K562 (cell line): ENCODE measurements at regions of chr6 and their contacts with region 1.

Region 1: DNA sequence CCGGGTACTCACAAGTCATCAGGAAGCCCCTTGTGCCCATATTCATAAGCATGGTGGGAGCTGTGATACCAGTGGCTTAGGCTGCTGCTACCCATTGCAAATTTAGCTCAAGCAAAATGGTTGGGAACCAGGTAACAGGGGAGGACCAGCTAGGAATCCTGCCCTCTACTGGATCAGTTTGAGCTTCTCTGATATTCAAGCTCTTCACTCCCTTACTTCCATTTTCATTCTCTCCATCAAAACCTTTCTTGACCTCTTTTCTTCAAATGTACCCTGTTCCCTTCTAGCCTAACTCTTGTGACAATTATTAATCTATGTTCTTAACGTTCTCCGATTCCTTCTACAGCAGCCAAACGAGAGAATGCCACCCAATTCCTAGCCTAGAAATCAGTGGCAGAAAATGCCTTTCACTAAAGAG is 9.7 kb downstream of the NOL7 start:
- DNase-seq: peak; percentile 57 to 75 (median 65)
- ATAC-seq: peak; percentile 91
- H3K4me3 ChIP-seq: no peak overlapping the region
- H3K27ac ChIP-seq: no peak overlapping the region
- H3K4me1 ChIP-seq: no peaks in the 10 kb centered on the region; a peak in 1 of 5 replicates
- H3K27me3 ChIP-seq: no peaks in the 10 kb centered on the region
- CTCF ChIP-seq: peak; percentile 53 to 69 (median 67)
- EP300 ChIP-seq: no peak
- POLR2A ChIP-seq: no peak; the same call in 1 of the 2 replicates
- RAD21 ChIP-seq: peak; percentile 38 to 64

Region 2: DNA sequence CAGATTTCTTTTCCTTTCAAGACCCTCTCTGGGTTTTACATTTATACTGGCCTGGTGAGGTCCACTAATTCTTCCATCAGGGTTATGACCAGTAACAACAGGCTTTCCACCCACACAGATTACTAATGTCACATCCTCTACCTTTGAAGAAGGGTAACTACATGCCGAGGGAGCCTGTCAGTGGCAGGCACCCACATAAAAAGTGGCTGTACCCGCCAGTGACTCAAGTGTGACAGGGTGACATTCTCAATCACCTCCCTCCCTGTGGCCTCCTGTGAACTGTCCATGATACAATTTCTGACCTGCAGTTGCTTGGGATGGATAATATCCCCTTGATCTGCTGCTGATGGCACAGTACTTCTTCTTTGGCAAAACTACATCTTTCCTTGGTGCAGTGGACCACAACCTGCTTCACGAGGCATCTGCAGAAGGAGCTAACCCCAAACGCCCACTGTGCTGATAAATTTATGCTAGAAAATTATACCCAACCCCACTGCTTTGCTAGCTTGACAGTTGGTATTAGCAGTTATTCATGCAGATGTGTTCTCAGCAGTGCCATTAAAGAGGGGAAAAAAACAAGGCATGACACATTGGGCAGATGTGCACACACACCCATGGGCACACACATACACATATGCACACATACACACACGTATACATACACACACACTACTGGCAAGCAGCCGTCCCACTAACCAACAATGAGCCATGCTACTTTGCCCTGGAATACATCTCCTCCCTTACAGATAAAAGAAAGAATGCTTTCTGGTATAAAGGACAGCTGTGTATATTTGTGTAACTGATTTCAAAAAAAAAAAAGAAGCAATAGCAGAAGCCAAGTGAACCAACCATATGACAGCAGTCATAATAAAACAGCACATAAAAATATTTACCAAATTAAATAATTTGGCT is 158.3 kb before region 1 on chr6:
- CTCF ChIA-PET with region 1: no interaction called
- POLR2A ChIA-PET with region 1: no interaction called
- in situ Hi-C with region 1: no loop called
- intact Hi-C with region 1: no loop called
- DNase-seq: peak in 1 of 4 experiments; percentile 8
- ATAC-seq: no peak
- H3K4me3 ChIP-seq: no peak overlapping the region
- H3K27ac ChIP-seq: no peak overlapping the region
- H3K4me1 ChIP-seq: peaks cover 0 to 2% of the 10 kb centered on the region in 2 experiments; a peak in 1 of 5 replicates
- H3K27me3 ChIP-seq: no peaks in the 10 kb centered on the region
- CTCF ChIP-seq: no peak
- EP300 ChIP-seq: no peak
- POLR2A ChIP-seq: no peak
- RAD21 ChIP-seq: no peak

Region 3: GRCh38 chr6:13593720-13594119 is 31.2 kb before region 1 on chr6:
- CTCF ChIA-PET with region 1: no interaction called
- POLR2A ChIA-PET with region 1: no interaction called
- in situ Hi-C with region 1: no loop called
- intact Hi-C with region 1: no loop called
- DNase-seq: no peak
- ATAC-seq: no peak
- H3K4me3 ChIP-seq: no peak overlapping the region
- H3K27ac ChIP-seq: no peak overlapping the region
- H3K4me1 ChIP-seq: peaks cover 0 to 5% of the 10 kb centered on the region in 2 experiments; a peak in 2 of 5 replicates
- H3K27me3 ChIP-seq: no peaks in the 10 kb centered on the region
- CTCF ChIP-seq: no peak
- EP300 ChIP-seq: no peak
- POLR2A ChIP-seq: no peak
- RAD21 ChIP-seq: no peak

Region 4: DNA sequence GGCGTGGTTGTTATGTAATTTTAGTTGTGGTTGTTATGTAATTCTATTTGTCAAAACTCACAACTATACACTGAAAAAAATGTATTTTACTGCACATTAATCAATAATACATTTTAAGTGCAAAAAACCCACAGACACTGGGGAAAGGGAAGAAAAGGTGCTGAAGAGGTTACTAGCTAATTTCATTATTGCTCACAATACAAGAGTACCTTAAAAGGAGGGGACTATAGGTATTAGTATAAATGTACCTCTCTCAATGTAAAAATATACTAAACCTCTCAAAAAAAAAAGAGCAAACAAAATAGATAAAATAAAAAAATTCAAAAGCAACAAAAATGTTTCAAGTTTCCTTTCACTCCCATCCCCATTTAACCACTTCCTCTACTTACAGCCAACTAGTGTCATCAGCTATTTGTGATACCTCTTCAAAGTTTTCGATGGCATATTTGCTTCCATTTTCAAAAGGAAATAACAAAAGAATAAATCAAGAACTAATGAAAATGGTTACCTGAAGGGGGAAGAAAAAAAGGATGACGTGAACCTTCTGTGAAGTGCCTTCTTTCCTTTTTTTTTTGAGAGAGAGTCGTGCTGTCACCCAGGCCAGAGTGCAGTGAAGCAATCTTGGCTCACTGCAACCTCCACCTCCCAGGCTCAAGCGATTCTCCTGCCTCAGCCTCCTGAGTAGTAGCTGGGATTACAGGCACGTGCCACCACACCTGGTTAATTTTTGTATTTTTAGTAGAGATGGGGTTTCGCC is 56.6 kb after region 1 on chr6:
- CTCF ChIA-PET with region 1: no interaction called
- POLR2A ChIA-PET with region 1: no interaction called
- in situ Hi-C with region 1: no loop called
- intact Hi-C with region 1: no loop called
- DNase-seq: no peak
- ATAC-seq: peak; percentile 13
- H3K4me3 ChIP-seq: no peak overlapping the region
- H3K27ac ChIP-seq: peak overlapping the region; percentile 81; the same call in 2 of the 3 replicates
- H3K4me1 ChIP-seq: peaks cover 8 to 28% of the 10 kb centered on the region in 2 experiments
- H3K27me3 ChIP-seq: no peaks in the 10 kb centered on the region
- CTCF ChIP-seq: no peak
- EP300 ChIP-seq: no peak
- POLR2A ChIP-seq: 0 out of 2 replicates have a peak, but pooled peaks have one; percentile 38
- RAD21 ChIP-seq: no peak

Region 5: GRCh38 chr6:13767121-13767808 is 142.4 kb after region 1 on chr6:
- CTCF ChIA-PET with region 1: no interaction called
- POLR2A ChIA-PET with region 1: no interaction called
- in situ Hi-C with region 1: no loop called
- intact Hi-C with region 1: loop called (anchors 5 kb)
- DNase-seq: peak in 1 of 4 experiments; percentile 34
- ATAC-seq: peak; percentile 74
- H3K4me3 ChIP-seq: no peak overlapping the region
- H3K27ac ChIP-seq: no peak overlapping the region
- H3K4me1 ChIP-seq: peaks cover 2 to 9% of the 10 kb centered on the region in 2 experiments; a peak in 2 of 5 replicates
- H3K27me3 ChIP-seq: no peaks in the 10 kb centered on the region
- CTCF ChIP-seq: peak in 1 of 3 experiments; percentile 42; a peak in 3 of 6 replicates
- EP300 ChIP-seq: no peak
- POLR2A ChIP-seq: no peak
- RAD21 ChIP-seq: peak; percentile 20 to 58; a peak in 2 of 4 replicates